ENCODE measurements at regions of chr4 and their contacts with region 1.

Region 1: GRCh38 chr4:109424093-109424841 is 9.3 kb upstream of the SEC24B start:
- DNase-seq: no peak
- H3K4me3 Mint-ChIP-seq: no peak overlapping the region
- H3K27ac Mint-ChIP-seq: no peak overlapping the region
- H3K4me1 Mint-ChIP-seq: no peaks in the 10 kb centered on the region
- H3K27me3 Mint-ChIP-seq: no peaks in the 10 kb centered on the region
- CTCF ChIP-seq: no peak

Region 2: GRCh38 chr4:109574102-109574850 is 150.0 kb after region 1 on chr4:
- CTCF ChIA-PET with region 1: interaction called, 3 read pairs
- intact Hi-C with region 1: loop called (anchors 5 kb)
- DNase-seq: peak; percentile 14
- H3K4me3 Mint-ChIP-seq: no peak overlapping the region
- H3K27ac Mint-ChIP-seq: peak overlapping the region; percentile 45
- H3K4me1 Mint-ChIP-seq: peaks cover 17% of the 10 kb centered on the region
- H3K27me3 Mint-ChIP-seq: no peaks in the 10 kb centered on the region
- CTCF ChIP-seq: no peak

Region 3: GRCh38 chr4:109665783-109666485 is 241.7 kb after region 1 on chr4:
- CTCF ChIA-PET with region 1: no interaction called
- intact Hi-C with region 1: loop called (anchors 10 kb)
- DNase-seq: no peak
- H3K4me3 Mint-ChIP-seq: no peak overlapping the region
- H3K27ac Mint-ChIP-seq: no peak overlapping the region
- H3K4me1 Mint-ChIP-seq: no peaks in the 10 kb centered on the region
- H3K27me3 Mint-ChIP-seq: no peaks in the 10 kb centered on the region
- CTCF ChIP-seq: no peak

Region 4: DNA sequence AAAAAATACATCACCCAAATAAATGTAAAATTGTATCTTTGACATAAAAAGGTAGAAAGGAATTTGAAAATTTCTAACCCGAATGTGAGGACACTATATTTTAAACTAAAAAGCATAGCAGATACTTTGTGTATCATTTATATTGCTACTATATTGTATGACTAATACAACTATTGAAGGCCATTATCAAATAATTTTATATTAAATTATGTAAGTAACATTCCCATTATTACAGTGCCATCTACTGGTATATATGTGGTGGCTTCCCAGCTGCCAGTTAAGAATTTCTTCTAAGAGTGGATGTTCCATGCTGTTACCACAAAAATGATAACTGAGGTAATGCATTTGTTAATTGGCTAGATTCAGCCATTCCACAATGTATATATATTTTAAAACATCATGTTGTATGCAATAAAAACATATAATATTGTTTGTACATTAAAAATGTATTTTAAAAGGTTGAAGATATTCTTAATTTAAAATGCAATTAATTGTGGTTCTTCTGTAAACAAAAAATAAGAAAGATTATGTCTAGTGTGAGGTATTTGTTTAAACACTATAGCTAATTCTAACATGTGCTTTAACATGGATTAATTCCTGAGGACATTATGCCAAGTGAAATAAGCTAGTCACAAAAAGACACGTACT is 553.7 kb after region 1 on chr4:
- CTCF ChIA-PET with region 1: no interaction called
- intact Hi-C with region 1: loop called (anchors 5 kb)
- DNase-seq: peak; percentile 9
- H3K4me3 Mint-ChIP-seq: no peak overlapping the region
- H3K27ac Mint-ChIP-seq: no peak overlapping the region
- H3K4me1 Mint-ChIP-seq: peaks cover 7% of the 10 kb centered on the region
- H3K27me3 Mint-ChIP-seq: no peaks in the 10 kb centered on the region
- CTCF ChIP-seq: no peak

Measured in Calu3 (cell line).